Activated CD4-positive, alpha-beta T cell treated with anti-CD3 and anti-CD28 coated beads for 36 hours (primary cell): ENCODE measurements at regions of chr1 and their contacts with region 1.

Region 1: GRCh38 chr1:230066466-230067404 is at the start of gene GALNT2:
- DNase-seq: peak; percentile 95
- ATAC-seq: peak; percentile 90
- H3K4me3 Mint-ChIP-seq: peak within 1 kb of the TSS; percentile 83
- H3K27ac Mint-ChIP-seq: peak within 1 kb of the TSS; percentile 89
- H3K4me1 Mint-ChIP-seq: peaks cover 37% of the 10 kb centered on the region
- H3K27me3 Mint-ChIP-seq: no peaks in the 10 kb centered on the region
- total RNA-seq, gene GALNT2: 48.2 to 51.0 TPM

Region 2: DNA sequence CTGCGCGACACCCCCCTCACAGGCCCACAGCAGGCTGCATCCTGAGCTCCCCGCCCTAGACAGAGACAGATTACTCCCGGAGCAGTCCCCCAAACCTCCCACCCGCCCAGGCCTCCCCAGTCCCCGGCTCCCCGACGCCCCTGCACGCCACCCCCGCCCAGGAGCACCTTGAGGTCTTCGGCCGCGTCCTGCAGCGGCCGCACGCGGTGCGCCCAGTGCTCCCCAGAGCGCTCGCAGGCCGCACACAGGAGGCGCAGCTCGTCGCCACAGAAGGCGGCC is 1660.8 kb before region 1 on chr1:
- CTCF ChIA-PET with region 1: no interaction called
- POLR2A ChIA-PET with region 1: no interaction called
- intact Hi-C with region 1: loop called in 1 of 2 experiments (anchors 5 kb)
- DNase-seq: no peak
- ATAC-seq: peak; percentile 2
- H3K4me3 Mint-ChIP-seq: peak overlapping the region; percentile 92
- H3K27ac Mint-ChIP-seq: peak overlapping the region; percentile 93
- H3K4me1 Mint-ChIP-seq: peaks cover 46% of the 10 kb centered on the region
- H3K27me3 Mint-ChIP-seq: no peaks in the 10 kb centered on the region

Region 3: DNA sequence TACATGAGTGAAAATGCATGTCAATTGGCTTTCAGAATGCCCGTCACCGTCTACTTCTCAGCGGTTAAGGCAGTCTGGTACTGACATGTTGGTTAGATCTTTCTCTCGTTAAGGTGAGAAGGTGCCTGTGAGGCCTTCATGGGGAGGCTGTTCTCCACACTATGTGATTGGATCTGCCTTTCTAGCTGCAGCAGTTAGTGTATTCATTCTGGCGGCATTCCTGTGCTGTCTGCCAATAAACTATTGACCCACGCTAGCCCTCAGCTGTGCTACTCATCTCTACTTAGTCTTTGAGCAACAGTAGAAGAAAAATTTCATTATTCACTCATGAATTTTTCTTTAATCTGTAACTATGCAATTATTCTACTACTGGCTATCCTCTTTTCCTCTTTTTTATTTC is 755.9 kb before region 1 on chr1:
- CTCF ChIA-PET with region 1: no interaction called
- POLR2A ChIA-PET with region 1: no interaction called
- intact Hi-C with region 1: no loop called
- DNase-seq: no peak
- ATAC-seq: no peak
- H3K4me3 Mint-ChIP-seq: no peak overlapping the region
- H3K27ac Mint-ChIP-seq: no peak overlapping the region
- H3K4me1 Mint-ChIP-seq: no peaks in the 10 kb centered on the region
- H3K27me3 Mint-ChIP-seq: no peaks in the 10 kb centered on the region

Region 4: GRCh38 chr1:229558571-229559335 is 508.0 kb before region 1 on chr1 and contains the start of gene ABCB10:
- CTCF ChIA-PET with region 1: no interaction called
- POLR2A ChIA-PET with region 1: no interaction called
- intact Hi-C with region 1: loop called in 1 of 2 experiments (anchors 1 kb)
- DNase-seq: peak; percentile 94
- ATAC-seq: peak; percentile 83
- H3K4me3 Mint-ChIP-seq: peak within 1 kb of the TSS; percentile 86
- H3K27ac Mint-ChIP-seq: peak within 1 kb of the TSS; percentile 89
- H3K4me1 Mint-ChIP-seq: peaks cover 34% of the 10 kb centered on the region
- H3K27me3 Mint-ChIP-seq: no peaks in the 10 kb centered on the region
- total RNA-seq, gene ABCB10: 18.4 to 30.1 TPM

Region 5: GRCh38 chr1:230031131-230031530 is 35.6 kb before region 1 on chr1:
- CTCF ChIA-PET with region 1: no interaction called
- POLR2A ChIA-PET with region 1: interaction called, 3 read pairs
- intact Hi-C with region 1: loop called in 1 of 2 experiments (anchors 2 kb)
- DNase-seq: peak; percentile 45
- ATAC-seq: peak; percentile 97
- H3K4me3 Mint-ChIP-seq: no peak overlapping the region
- H3K27ac Mint-ChIP-seq: peak overlapping the region; percentile 68
- H3K4me1 Mint-ChIP-seq: peaks cover 20% of the 10 kb centered on the region
- H3K27me3 Mint-ChIP-seq: no peaks in the 10 kb centered on the region

Region 6: DNA sequence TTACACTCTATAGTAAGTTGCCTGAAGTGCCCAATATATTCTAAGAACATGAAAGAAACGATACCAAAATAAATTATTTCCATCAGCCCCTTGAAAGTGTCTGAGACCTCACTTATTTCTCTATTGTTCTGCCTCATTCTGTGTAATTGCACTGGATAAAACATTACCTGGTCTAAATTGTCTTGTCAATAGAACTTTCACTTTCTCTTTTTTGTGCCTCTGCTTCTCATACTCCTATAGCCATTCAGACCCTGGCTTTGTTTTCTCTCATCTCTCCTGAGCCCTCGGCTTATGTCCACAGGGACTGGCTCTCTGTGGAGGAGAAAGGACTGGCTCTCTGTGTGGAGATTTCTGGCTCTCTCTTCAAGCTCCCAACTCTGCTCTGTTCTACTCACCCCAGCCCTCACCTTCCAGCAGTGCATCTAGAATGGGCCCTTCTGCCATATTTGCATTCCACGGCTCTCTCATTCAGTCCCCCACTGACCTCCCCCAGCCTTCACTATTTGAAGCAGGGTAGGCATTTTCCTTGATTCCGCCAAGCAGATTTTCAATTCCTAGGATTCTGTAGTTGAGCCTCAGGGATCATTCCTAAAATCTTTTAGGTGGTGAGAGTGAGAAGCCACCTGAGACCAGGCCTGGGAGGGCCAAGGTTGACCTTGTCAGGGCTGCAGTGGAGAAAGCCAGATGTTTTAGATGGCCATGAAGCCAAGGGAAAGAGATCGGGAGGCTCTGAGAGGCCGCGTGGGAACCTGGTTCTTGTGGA is 15.6 kb before region 1 on chr1:
- CTCF ChIA-PET with region 1: no interaction called
- POLR2A ChIA-PET with region 1: no interaction called
- intact Hi-C with region 1: no loop called
- DNase-seq: no peak
- ATAC-seq: no peak
- H3K4me3 Mint-ChIP-seq: no peak overlapping the region
- H3K27ac Mint-ChIP-seq: no peak overlapping the region
- H3K4me1 Mint-ChIP-seq: peaks cover 4% of the 10 kb centered on the region
- H3K27me3 Mint-ChIP-seq: peaks cover 3% of the 10 kb centered on the region

Region 7: GRCh38 chr1:230109895-230110667 is 43.3 kb after region 1 on chr1:
- CTCF ChIA-PET with region 1: interaction called, 5 read pairs
- POLR2A ChIA-PET with region 1: interaction called, 7 read pairs
- intact Hi-C with region 1: loop called in 1 of 2 experiments (anchors 1 kb)
- DNase-seq: peak; percentile 94
- ATAC-seq: peak; percentile 91
- H3K4me3 Mint-ChIP-seq: peak overlapping the region; percentile 48
- H3K27ac Mint-ChIP-seq: peak overlapping the region; percentile 94
- H3K4me1 Mint-ChIP-seq: peaks cover 88% of the 10 kb centered on the region
- H3K27me3 Mint-ChIP-seq: no peaks in the 10 kb centered on the region

Region 8: DNA sequence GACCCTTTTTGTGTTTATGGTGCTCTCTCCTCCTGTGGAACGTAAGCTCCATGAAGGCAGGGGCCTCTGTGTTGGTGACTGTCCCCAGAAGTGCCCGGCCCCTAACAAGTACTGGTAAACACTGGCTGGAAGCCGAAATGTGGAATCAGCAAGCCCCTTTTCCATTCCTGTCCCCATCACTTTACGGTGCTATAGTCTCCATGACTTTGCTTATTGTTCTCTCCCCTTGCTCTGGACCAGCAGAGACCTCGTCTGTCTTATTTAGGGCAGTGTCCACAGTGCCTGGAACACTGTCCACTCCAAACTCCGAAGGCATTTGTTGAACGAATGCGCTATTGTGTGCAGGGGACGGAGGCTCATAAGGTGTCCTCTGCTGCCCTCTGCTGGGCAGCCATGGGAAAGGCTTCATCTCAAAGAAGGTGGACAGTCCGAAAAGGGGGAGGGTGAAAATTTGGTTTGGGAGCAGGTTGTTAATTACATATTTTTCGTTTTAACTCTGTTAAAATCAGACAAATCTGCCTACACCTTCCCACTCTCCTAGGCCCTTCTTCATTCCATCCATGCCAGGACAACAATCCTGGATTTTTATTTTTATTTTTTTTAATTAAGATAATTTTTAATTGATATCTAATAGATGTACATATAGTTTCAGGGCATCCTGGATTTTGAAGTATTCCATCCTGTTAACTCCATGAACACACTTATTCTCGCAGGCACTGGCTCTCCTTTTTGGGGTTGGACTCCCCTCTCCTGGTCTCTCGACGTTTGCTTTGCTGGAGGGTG is 243.8 kb after region 1 on chr1:
- CTCF ChIA-PET with region 1: no interaction called
- POLR2A ChIA-PET with region 1: no interaction called
- intact Hi-C with region 1: loop called in 1 of 2 experiments (anchors 5 kb)
- DNase-seq: peak; percentile 82
- ATAC-seq: peak; percentile 48
- H3K4me3 Mint-ChIP-seq: no peak overlapping the region
- H3K27ac Mint-ChIP-seq: no peak overlapping the region
- H3K4me1 Mint-ChIP-seq: peaks cover 15% of the 10 kb centered on the region
- H3K27me3 Mint-ChIP-seq: peaks cover 4% of the 10 kb centered on the region